ENCODE measurements at regions of chr10 and their contacts with region 1.

Region 1: GRCh38 chr10:99430451-99431189 is at the start of gene GOT1:
- DNase-seq: peak; percentile 91 to 95
- H3K4me3 ChIP-seq: peak within 1 kb of the TSS; percentile 87 to 99 (median 98)
- H3K27ac ChIP-seq: peak within 1 kb of the TSS; percentile 83
- H3K4me1 ChIP-seq: peaks cover 0 to 4% (median 0%) of the 10 kb centered on the region in 4 experiments; a peak in 1 of 7 replicates
- H3K27me3 ChIP-seq: no peaks in the 10 kb centered on the region
- CTCF ChIP-seq: no peak
- EP300 ChIP-seq: no peak
- POLR2A ChIP-seq: peak; percentile 87 to 94
- RAD21 ChIP-seq: no peak
- total RNA-seq, gene GOT1: 45.6 and 47.0 TPM in 2 replicates

Region 2: DNA sequence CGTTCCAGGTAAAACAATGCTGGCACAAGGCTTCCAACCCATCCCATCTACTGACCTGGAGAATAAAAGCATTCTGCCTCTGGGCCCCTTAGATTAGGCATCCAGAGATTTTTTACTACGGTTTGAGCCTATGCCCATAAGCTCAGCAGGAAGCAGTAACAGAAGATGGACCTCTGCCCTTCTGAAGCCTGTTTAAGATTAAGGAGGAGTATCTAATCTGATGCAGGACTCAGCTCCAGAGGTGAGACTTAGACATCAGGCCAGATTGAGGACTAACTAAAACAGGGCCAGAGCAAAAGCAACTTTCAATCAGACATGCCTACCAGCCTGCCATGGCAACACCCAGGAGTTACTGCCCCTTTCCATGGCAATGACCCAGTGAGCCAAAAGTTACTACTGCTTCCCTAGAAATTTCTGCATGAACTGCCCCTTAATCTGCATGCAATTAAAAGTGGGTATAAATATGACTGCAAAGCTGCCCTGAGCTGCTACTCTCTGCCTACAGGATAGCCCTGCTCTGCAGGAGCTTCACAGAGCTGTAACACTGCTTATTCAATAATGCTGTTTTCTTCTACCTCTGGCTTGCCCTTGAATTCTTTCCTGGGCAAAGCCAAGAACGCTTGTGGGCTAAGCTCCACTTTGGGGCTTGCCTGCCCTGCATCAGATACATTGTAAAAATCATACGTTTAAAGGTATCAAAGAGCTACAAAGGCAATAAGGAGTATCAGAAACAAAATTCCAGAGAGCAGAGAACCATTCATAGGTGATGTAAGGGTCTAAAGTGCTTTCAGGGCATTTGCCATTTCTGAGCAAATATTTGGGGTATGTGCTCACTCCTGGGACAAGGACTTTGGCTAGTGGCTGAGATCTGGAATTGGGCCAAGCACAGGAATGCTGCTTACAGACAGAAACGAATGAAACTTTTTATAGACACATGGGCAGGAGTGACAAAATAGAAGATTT is 126.4 kb before region 1 on chr10:
- CTCF ChIA-PET with region 1: no interaction called
- POLR2A ChIA-PET with region 1: no interaction called
- DNase-seq: no peak
- H3K4me3 ChIP-seq: no peak overlapping the region
- H3K27ac ChIP-seq: no peak overlapping the region
- H3K4me1 ChIP-seq: no peaks in the 10 kb centered on the region
- H3K27me3 ChIP-seq: no peaks in the 10 kb centered on the region
- CTCF ChIP-seq: no peak
- EP300 ChIP-seq: no peak
- POLR2A ChIP-seq: no peak
- RAD21 ChIP-seq: no peak

Region 3: GRCh38 chr10:99375444-99375843 is 55.2 kb before region 1 on chr10:
- CTCF ChIA-PET with region 1: no interaction called
- POLR2A ChIA-PET with region 1: no interaction called
- DNase-seq: no peak
- H3K4me3 ChIP-seq: no peak overlapping the region
- H3K27ac ChIP-seq: no peak overlapping the region
- H3K4me1 ChIP-seq: no peaks in the 10 kb centered on the region
- H3K27me3 ChIP-seq: no peaks in the 10 kb centered on the region
- CTCF ChIP-seq: no peak
- EP300 ChIP-seq: no peak
- POLR2A ChIP-seq: no peak
- RAD21 ChIP-seq: no peak

Region 4: GRCh38 chr10:99387071-99387470 is 43.5 kb before region 1 on chr10:
- CTCF ChIA-PET with region 1: interaction called, 21 read pairs
- POLR2A ChIA-PET with region 1: interaction called, 17 read pairs
- DNase-seq: no peak
- H3K4me3 ChIP-seq: no peak overlapping the region
- H3K27ac ChIP-seq: no peak overlapping the region
- H3K4me1 ChIP-seq: no peaks in the 10 kb centered on the region
- H3K27me3 ChIP-seq: no peaks in the 10 kb centered on the region
- CTCF ChIP-seq: no peak
- EP300 ChIP-seq: no peak
- POLR2A ChIP-seq: no peak
- RAD21 ChIP-seq: no peak

Region 5: DNA sequence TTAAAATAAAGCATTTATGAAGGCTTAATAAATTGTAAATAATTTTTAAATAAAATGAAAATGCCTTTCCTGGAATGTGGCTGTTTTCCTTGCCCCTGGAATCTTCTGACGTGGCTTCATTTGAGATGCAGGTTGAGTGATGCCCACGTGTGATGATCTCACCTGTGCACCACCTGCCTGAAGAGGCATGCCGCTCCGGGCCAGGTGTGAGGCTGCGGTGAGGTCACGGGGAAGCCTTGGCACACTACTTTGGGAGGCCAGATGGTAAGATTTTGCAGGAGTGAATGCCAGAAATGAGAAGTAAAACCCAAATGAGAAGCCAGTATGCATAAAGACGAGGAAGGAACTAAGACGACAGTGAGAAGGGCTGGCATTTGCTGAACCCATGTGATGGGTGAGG is 36.4 kb before region 1 on chr10:
- CTCF ChIA-PET with region 1: interaction called, 21 read pairs
- POLR2A ChIA-PET with region 1: interaction called, 17 read pairs
- DNase-seq: no peak
- H3K4me3 ChIP-seq: no peak overlapping the region
- H3K27ac ChIP-seq: no peak overlapping the region
- H3K4me1 ChIP-seq: peaks cover 3 to 18% (median 11%) of the 10 kb centered on the region in 4 experiments; a peak in 6 of 7 replicates
- H3K27me3 ChIP-seq: no peaks in the 10 kb centered on the region
- CTCF ChIP-seq: no peak
- EP300 ChIP-seq: no peak
- POLR2A ChIP-seq: no peak
- RAD21 ChIP-seq: no peak

Region 6: DNA sequence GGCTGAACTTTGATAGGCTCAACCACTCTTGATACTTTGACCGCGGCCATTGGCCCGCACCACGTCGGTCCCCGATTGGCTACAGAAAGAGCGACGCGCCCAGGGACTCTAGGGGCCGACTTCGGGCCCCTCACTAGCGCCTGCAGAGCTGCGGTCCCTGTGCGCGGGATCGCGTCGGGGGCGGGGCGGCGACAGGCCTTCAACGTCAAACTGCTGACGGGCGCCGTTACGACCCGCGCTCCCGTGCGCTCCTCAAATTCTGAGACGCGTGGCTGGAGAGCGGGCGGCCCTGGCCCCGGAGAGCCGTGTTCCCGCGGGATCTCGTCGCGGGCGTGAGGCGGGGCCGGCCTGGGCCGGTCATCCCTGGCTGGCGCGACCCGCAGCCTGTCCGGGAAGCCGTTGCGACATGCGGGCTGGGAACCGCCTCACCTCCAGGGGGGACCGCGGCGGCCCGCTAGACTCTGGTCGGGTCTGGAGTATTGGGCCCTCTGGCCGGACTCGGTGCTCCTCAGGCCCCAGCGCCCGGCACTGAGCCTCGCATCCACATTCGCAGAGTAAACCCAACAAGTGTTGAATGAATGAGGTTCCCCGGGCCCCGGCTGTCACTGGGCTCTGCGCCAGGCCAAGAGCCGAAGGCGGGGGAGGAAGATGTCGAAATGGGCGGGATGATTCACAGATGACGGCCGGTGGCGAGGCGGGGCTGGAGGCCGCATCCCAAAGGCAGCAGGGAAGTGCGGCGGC is 190.3 kb after region 1 on chr10:
- CTCF ChIA-PET with region 1: interaction called, 77 read pairs
- POLR2A ChIA-PET with region 1: interaction called, 30 read pairs
- DNase-seq: peak in 1 of 2 experiments; percentile 88
- H3K4me3 ChIP-seq: peak overlapping the region; percentile 62 to 76 (median 70)
- H3K27ac ChIP-seq: peak overlapping the region; percentile 72
- H3K4me1 ChIP-seq: peaks cover 0 to 6% (median 3%) of the 10 kb centered on the region in 4 experiments; a peak in 6 of 7 replicates
- H3K27me3 ChIP-seq: no peaks in the 10 kb centered on the region
- CTCF ChIP-seq: no peak
- EP300 ChIP-seq: no peak
- POLR2A ChIP-seq: peak; percentile 64 to 81
- RAD21 ChIP-seq: no peak

Measured in H1 (cell line).